Heart right ventricle (tissue), 16 donors: ENCODE measurements at regions of chr10 and their contacts with region 1.

Region 1: DNA sequence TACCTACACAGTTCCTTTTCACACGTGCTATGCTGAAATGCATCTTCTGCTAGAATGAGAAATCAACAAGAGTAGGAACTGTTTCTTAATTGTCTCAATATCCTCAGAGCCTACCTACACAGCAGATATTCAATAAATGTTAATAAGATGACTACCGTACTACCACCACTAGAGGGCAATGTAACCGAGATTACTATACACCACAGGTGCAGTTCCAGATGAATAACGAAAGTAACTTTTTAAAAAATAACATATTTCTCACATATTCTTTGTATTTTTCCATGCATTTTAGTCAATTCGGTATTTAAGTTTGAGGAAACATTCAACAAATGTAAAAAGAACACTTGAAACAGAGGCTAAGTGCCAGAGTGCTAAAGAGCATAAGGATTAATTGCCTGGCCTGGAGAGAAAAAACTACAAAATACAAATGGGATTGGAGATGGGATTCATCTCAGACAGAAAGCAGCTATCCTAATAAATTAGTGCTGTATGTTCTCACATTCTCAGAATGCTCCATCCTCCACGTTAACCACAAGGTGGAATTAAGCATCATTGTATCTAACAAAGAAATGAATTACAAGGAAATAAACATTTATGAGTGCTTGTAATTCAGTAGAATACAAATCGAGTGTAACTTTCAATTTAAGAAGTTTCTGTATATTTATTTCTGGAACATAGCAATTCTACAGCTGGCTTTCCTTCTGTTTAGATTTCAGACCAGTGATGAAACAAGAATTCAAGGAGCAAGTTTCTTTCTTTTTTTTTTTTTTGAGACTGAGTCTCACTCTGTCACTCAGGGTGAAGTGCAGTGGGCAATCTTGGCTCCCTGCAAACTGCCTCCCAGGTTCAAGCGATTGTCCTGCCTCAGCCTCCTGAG is 20.3 kb upstream of the HECTD2 start:
- DNase-seq: peak in 1 of 2 donors; percentile 9
- ATAC-seq: peak in 7 of 8 donors; percentile 58 to 80 (median 71)
- H3K4me3 ChIP-seq: no peak overlapping the region
- H3K27ac ChIP-seq: no peak overlapping the region
- H3K4me1 ChIP-seq: peaks cover 0 to 4% (median 0%) of the 10 kb centered on the region in 9 donors
- H3K27me3 ChIP-seq: peaks cover 0 to 24% (median 0%) of the 10 kb centered on the region in 7 donors
- CTCF ChIP-seq: peak; percentile 37 to 82 (median 72)

Region 2: GRCh38 chr10:90871766-90872647 is 517.9 kb before region 1 on chr10 and contains the start of gene RPP30:
- intact Hi-C with region 1: loop called in 1 of 10 experiments (anchors 10 kb)
- DNase-seq: peak; percentile 83
- ATAC-seq: peak; percentile 98 to 99 (median 99)
- H3K4me3 ChIP-seq: peak within 1 kb of the TSS; percentile 47 to 92 (median 74)
- H3K27ac ChIP-seq: peak within 1 kb of the TSS in 9 of 10 donors; percentile 13 to 79 (median 62)
- H3K4me1 ChIP-seq: peaks cover 0 to 31% (median 18%) of the 10 kb centered on the region in 9 donors
- H3K27me3 ChIP-seq: peaks cover 0 to 8% (median 3%) of the 10 kb centered on the region in 7 donors
- CTCF ChIP-seq: no peak
- total RNA-seq, gene RPP30: 27.9 to 40.4 (median 33.3) TPM

Region 3: GRCh38 chr10:91409869-91410637 is 20.2 kb after region 1 on chr10 and contains the start of gene HECTD2:
- intact Hi-C with region 1: loop called in 1 of 10 experiments (anchors 2 kb)
- DNase-seq: peak; percentile 81 to 85
- ATAC-seq: peak; percentile 67 to 91 (median 84)
- H3K4me3 ChIP-seq: peak within 1 kb of the TSS; percentile 66 to 92 (median 88)
- H3K27ac ChIP-seq: peak within 1 kb of the TSS; percentile 99 to 100 (median 100)
- H3K4me1 ChIP-seq: peaks cover 0 to 27% (median 13%) of the 10 kb centered on the region in 9 donors
- H3K27me3 ChIP-seq: no peaks in the 10 kb centered on the region
- CTCF ChIP-seq: peak; percentile 24 to 72 (median 48)
- total RNA-seq, gene HECTD2: 3.1 to 6.9 (median 5.4) TPM

Region 4: GRCh38 chr10:91541481-91541880 is 151.6 kb after region 1 on chr10:
- intact Hi-C with region 1: loop called in 2 of 10 experiments (anchors 10 kb)
- DNase-seq: no peak
- ATAC-seq: peak in 5 of 8 donors; percentile 14 to 58 (median 37)
- H3K4me3 ChIP-seq: no peak overlapping the region
- H3K27ac ChIP-seq: no peak overlapping the region
- H3K4me1 ChIP-seq: peaks cover 0 to 23% (median 6%) of the 10 kb centered on the region in 9 donors
- H3K27me3 ChIP-seq: no peaks in the 10 kb centered on the region
- CTCF ChIP-seq: no peak

Region 5: GRCh38 chr10:91551856-91552255 is 162.0 kb after region 1 on chr10:
- intact Hi-C with region 1: loop called in 3 of 10 experiments (anchors 10 kb)
- DNase-seq: peak; percentile 38 to 62
- ATAC-seq: peak; percentile 75 to 93 (median 86)
- H3K4me3 ChIP-seq: peak overlapping the region in 8 of 10 donors; percentile 3 to 44 (median 32)
- H3K27ac ChIP-seq: peak overlapping the region in 5 of 10 donors; percentile 23 to 55 (median 42)
- H3K4me1 ChIP-seq: peaks cover 0 to 24% (median 3%) of the 10 kb centered on the region in 9 donors
- H3K27me3 ChIP-seq: no peaks in the 10 kb centered on the region
- CTCF ChIP-seq: peak in 8 of 9 donors; percentile 36 to 84 (median 73)

Region 6: GRCh38 chr10:91643700-91644099 is 253.8 kb after region 1 on chr10:
- intact Hi-C with region 1: loop called in 8 of 10 experiments (anchors 5 to 10 kb)
- DNase-seq: no peak
- ATAC-seq: no peak
- H3K4me3 ChIP-seq: no peak overlapping the region
- H3K27ac ChIP-seq: no peak overlapping the region
- H3K4me1 ChIP-seq: no peaks in the 10 kb centered on the region
- H3K27me3 ChIP-seq: peaks cover 0 to 6% (median 3%) of the 10 kb centered on the region in 7 donors
- CTCF ChIP-seq: peak in 4 of 9 donors; percentile 9 to 27 (median 20)

Region 7: GRCh38 chr10:91908337-91909116 is 518.7 kb after region 1 on chr10:
- intact Hi-C with region 1: loop called in 2 of 10 experiments (anchors 5 to 10 kb)
- DNase-seq: peak; percentile 65 to 76
- ATAC-seq: peak; percentile 95 to 97 (median 96)
- H3K4me3 ChIP-seq: peak overlapping the region; percentile 54 to 95 (median 80)
- H3K27ac ChIP-seq: peak overlapping the region; percentile 39 to 85 (median 70)
- H3K4me1 ChIP-seq: peaks cover 0 to 23% (median 12%) of the 10 kb centered on the region in 9 donors
- H3K27me3 ChIP-seq: peaks cover 0 to 4% (median 0%) of the 10 kb centered on the region in 7 donors
- CTCF ChIP-seq: peak in 7 of 9 donors; percentile 25 to 72 (median 50)